Activated CD4-positive, alpha-beta T cell treated with anti-CD3 and anti-CD28 coated beads for 36 hours (primary cell): ENCODE measurements at regions of chr6 and their contacts with region 1.

Region 1: DNA sequence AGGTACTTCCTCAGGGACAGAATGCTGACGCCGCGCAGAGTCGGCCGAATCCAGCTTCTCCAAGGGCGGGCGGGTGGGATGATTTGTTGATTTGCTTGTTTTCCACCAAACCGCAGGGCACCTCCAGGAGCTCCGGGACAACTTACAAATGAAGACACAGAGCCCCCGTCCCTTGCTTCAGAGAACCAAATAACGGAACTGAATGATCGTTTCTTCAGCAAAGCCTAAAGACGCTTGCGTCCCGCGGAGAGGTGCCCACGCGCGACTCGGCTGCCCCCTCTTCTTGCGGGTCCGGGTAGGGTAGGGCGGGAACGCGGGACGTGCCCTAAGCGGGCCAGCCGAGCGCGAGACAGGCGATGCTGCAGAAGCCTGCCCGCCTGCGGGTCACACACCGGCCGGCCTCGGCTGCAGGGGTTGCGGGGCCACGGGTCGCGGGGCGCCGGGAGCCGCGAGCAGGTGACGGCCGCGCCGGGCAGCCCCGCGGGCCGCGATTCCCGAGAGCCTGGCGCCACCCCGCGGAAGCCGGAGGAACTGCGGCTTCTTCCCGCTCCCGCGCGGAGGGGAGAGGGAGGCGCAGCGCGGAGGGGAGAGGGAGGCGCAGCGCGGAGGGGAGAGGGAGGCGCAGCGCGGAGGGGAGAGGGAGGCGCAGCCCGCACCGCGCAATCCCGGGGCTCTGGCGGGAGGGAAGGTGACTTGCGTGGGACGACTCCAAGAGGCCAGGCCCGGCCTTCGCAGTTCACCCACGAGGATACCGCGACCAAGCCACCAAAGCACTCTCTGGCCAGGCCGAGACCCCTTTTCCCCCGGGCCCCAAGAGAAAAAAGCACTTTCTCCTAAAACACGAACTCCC is 7.7 kb upstream of the FOXF2 start:
- DNase-seq: peak; percentile 77
- ATAC-seq: peak; percentile 75
- H3K4me3 Mint-ChIP-seq: peak overlapping the region; percentile 10
- H3K27ac Mint-ChIP-seq: no peak overlapping the region
- H3K4me1 Mint-ChIP-seq: peaks cover 38% of the 10 kb centered on the region
- H3K27me3 Mint-ChIP-seq: peaks cover 68% of the 10 kb centered on the region

Region 2: GRCh38 chr6:906920-907319 is 474.8 kb before region 1 on chr6:
- CTCF ChIA-PET with region 1: no interaction called
- POLR2A ChIA-PET with region 1: no interaction called
- intact Hi-C with region 1: loop called in 1 of 2 experiments (anchors 5 kb)
- DNase-seq: no peak
- ATAC-seq: no peak
- H3K4me3 Mint-ChIP-seq: no peak overlapping the region
- H3K27ac Mint-ChIP-seq: no peak overlapping the region
- H3K4me1 Mint-ChIP-seq: no peaks in the 10 kb centered on the region
- H3K27me3 Mint-ChIP-seq: peaks cover 2% of the 10 kb centered on the region

Region 3: GRCh38 chr6:1311400-1312202 is 70.1 kb before region 1 on chr6 and contains the start of gene FOXQ1:
- CTCF ChIA-PET with region 1: interaction called, 4 read pairs
- POLR2A ChIA-PET with region 1: no interaction called
- intact Hi-C with region 1: loop called (anchors 2 to 5 kb)
- DNase-seq: peak; percentile 41
- ATAC-seq: peak; percentile 12
- H3K4me3 Mint-ChIP-seq: peak within 1 kb of the TSS; percentile 53
- H3K27ac Mint-ChIP-seq: no peak within 1 kb of the TSS
- H3K4me1 Mint-ChIP-seq: peaks cover 24% of the 10 kb centered on the region
- H3K27me3 Mint-ChIP-seq: peaks cover 65% of the 10 kb centered on the region
- total RNA-seq, gene FOXQ1: not detected